ENCODE measurements at regions of chr10 and their contacts with region 1.

Region 1: GRCh38 chr10:116158036-116158435 is 115.0 kb downstream of the GFRA1 start:
- DNase-seq: no peak
- ATAC-seq: no peak

Region 2: GRCh38 chr10:115239761-115240160 is 918.3 kb before region 1 on chr10:
- intact Hi-C with region 1: loop called (anchors 5 kb)
- DNase-seq: no peak
- ATAC-seq: no peak

Region 3: GRCh38 chr10:116113721-116114501 is 44.1 kb before region 1 on chr10:
- intact Hi-C with region 1: no loop called
- DNase-seq: no peak
- ATAC-seq: peak; percentile 52

Measured in sciatic nerve (tissue), 2 donors.